ENCODE measurements at regions of chr7 and their contacts with region 1.

Region 1: GRCh38 chr7:101138213-101138870 is 11.4 kb downstream of the SERPINE1 start:
- DNase-seq: peak; percentile 86

Region 2: DNA sequence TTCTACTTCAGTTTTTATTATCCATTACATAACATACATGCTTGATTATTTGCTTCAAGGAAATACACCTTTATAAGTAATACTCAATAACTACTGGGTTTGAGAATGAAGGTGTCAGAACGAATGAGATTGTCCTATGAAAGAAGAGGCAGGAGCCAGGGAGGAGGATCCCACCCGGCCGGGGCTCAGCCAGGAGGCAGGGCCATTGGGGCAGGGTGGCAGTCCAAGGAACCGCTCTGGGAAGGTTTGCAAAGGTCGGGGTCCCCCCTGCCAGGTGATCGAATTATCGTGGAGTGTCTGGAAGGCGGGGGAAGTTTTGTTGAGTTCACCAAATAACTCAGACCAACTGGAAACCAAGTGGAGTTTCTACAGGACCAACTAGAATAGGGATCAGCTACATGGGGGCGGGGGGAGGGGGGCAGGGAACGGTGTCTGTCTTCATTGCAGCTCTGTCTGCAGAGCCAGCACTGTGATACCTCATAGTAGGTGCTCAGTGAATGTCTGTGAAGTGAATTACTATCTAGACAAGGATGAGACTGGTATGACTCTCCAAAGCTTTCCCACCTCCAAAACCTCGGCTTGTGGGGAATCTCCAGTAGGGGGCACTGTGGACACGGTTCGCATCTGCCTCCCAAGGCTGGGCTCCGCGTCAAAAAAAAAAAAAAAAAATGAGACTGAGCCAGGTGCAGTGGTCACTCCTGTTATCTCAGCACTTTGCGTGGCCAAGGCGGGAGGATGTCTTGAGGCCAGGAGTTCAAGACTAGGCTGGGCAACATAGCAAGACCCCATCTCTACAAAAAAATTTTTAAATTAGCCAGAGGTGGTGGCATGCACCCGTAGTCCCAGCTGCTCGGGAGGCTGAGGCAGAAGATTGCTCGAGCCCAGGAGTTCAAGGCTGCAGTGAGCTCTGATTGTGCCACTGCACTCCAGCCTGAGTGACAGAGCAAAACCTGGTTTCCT is 43.6 kb before region 1 on chr7:
- intact Hi-C with region 1: loop called (anchors 1 kb)
- DNase-seq: no peak

Region 3: DNA sequence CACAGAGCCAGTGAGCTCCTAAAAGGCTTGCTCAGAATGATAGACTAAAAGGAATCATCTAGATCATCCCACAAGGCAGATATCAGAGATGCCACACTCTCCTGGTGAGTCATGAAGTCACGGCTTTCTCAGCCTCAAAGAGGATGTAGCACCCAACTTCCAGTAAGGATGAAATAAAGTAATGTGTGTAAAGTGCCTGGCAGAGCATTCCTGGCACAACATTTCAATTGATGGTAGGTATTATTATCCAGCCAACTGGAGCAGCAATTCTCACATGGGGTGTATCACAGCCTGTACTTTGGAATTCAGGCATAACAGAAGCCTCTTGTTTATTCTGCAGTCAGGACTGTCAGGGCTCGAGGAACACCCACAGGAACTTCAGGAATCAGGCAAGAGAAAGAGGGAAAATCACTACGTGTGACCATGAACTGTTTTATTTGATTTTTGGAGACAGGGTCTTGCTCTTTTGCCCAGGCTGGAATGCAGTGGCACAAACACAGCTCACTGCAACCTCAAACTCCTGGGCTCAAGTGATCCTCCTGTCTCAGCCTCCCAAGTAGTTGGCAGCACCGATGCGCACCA is 47.0 kb after region 1 on chr7:
- intact Hi-C with region 1: loop called (anchors 5 kb)
- DNase-seq: no peak